ENCODE measurements at regions of chr6 and their contacts with region 1.

Region 1: DNA sequence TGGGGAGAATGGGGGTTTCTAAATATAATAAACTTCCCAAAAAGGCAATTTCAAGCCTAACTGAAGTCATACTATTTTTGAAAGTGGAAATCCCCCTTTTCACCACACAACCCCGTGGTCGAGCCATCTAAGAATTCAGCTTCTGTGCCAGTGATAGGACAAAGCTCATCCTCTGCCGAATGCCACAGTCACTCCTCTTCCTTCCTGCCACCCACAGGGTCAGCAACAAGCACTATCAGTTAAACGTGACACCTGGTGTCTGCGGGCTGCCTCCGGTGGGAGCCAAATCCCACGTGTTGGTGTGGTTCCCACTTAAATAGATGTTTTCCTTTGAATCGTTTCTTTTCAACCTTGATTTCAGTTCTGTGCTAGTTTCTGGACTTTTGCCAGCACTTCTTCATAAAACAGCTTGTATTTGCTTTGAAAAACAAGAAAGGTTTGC is 60.7 kb downstream of the TNFAIP3 start:
- H3K4me3 Mint-ChIP-seq: peak overlapping the region; percentile 64
- H3K27ac Mint-ChIP-seq: peak overlapping the region; percentile 89
- H3K4me1 Mint-ChIP-seq: peaks cover 65% of the 10 kb centered on the region
- H3K27me3 Mint-ChIP-seq: no peaks in the 10 kb centered on the region

Region 2: DNA sequence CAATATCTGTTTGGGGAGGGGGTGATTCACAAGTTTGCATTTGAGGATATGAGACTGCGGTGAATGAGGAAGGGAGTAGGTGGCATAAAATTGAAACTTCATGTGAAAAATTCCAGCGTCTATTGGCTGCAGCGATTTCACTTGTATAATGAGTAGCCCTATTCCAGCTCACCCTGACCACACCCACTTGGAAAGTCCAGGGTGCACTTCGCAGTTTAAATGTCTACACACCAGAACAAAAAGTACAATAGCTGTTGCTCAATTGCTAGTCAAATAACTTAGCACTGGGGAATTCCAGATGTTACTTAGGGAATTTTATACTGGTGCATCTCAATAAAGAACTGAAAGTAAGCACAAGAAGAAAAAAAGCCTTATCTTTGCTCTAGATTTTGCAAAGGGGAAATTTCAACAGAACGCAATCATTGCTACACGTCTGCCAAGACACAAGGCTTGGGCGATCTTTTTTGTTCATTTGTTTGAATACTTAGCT is 54.5 kb before region 1 on chr6:
- intact Hi-C with region 1: loop called (anchors 5 kb)
- H3K4me3 Mint-ChIP-seq: peak overlapping the region; percentile 73
- H3K27ac Mint-ChIP-seq: peak overlapping the region; percentile 88
- H3K4me1 Mint-ChIP-seq: peaks cover 67% of the 10 kb centered on the region
- H3K27me3 Mint-ChIP-seq: no peaks in the 10 kb centered on the region